Psoas muscle (tissue), 8 donors: ENCODE measurements at regions of chr18 and their contacts with region 1.

Region 1: DNA sequence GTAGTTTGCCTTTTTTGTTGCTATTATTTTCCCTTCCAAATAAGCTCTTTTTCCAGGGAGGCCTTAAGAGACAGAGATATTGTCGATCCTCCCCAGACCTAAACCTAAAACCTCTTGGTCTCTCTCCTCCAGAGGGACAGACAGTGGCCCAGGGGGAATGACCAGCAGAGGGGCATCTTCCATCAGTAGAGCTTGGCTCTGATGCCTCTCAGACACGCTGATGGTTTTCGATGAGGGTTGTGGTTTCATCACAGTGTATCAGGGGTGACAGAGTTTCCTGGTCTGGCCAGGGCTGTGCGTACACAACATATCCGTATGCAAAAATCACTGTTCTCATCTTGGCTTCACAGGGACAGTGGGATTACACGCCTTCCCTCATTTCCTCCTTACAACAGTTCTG is 68.6 kb downstream of the GATA6 start:
- DNase-seq: no peak
- ATAC-seq: no peak
- H3K4me3 ChIP-seq: no peak overlapping the region
- H3K27ac ChIP-seq: no peak overlapping the region
- H3K4me1 ChIP-seq: no peaks in the 10 kb centered on the region
- H3K27me3 ChIP-seq: peaks cover 0 to 2% (median 0%) of the 10 kb centered on the region in 3 donors
- CTCF ChIP-seq: no peak

Region 2: GRCh38 chr18:22296304-22296703 is 58.3 kb after region 1 on chr18:
- intact Hi-C with region 1: loop called in 1 of 2 experiments (anchors 5 kb)
- DNase-seq: no peak
- ATAC-seq: no peak
- H3K4me3 ChIP-seq: no peak overlapping the region
- H3K27ac ChIP-seq: no peak overlapping the region
- H3K4me1 ChIP-seq: no peaks in the 10 kb centered on the region
- H3K27me3 ChIP-seq: no peaks in the 10 kb centered on the region
- CTCF ChIP-seq: no peak

Region 3: DNA sequence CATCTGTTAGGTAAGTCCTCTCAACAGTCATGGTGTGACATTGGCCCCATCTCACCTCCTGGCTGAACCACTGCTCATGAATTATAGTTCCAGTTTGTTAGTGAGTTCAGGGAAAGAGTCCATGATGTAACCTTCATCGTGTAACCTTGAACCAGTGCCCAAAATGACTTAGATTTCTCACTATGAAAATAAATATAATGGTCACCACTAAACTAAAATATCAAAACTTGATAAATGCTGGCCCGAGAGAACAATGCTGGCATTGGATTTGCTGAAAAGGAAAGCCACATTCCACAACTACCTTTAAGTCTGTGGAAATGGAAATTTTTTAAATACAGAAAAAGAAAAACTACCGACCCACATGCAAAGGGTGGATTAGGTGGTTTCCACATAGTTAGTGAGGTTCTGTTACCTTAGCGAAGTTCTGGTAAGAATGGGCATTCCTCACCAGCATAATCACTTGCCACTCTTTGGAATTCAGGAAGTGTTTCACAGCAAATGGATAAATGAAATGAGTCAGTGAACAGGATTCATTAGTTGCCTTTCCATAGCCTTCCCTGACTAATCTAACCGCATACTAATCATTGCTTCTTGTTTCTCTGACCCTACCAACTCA is 313.6 kb after region 1 on chr18:
- intact Hi-C with region 1: no loop called
- DNase-seq: no peak
- ATAC-seq: no peak
- H3K4me3 ChIP-seq: no peak overlapping the region
- H3K27ac ChIP-seq: no peak overlapping the region
- H3K4me1 ChIP-seq: no peaks in the 10 kb centered on the region
- H3K27me3 ChIP-seq: peaks cover 0 to 3% (median 0%) of the 10 kb centered on the region in 3 donors
- CTCF ChIP-seq: no peak